ENCODE measurements at regions of chr12 and their contacts with region 1.

Region 1: GRCh38 chr12:12290206-12290605 is 23.4 kb upstream of the LRP6 start:
- DNase-seq: no peak
- H3K4me3 ChIP-seq: no peak overlapping the region
- H3K27ac ChIP-seq: no peak overlapping the region
- H3K4me1 ChIP-seq: peaks cover 10% of the 10 kb centered on the region
- H3K27me3 ChIP-seq: no peaks in the 10 kb centered on the region
- CTCF ChIP-seq: no peak

Region 2: DNA sequence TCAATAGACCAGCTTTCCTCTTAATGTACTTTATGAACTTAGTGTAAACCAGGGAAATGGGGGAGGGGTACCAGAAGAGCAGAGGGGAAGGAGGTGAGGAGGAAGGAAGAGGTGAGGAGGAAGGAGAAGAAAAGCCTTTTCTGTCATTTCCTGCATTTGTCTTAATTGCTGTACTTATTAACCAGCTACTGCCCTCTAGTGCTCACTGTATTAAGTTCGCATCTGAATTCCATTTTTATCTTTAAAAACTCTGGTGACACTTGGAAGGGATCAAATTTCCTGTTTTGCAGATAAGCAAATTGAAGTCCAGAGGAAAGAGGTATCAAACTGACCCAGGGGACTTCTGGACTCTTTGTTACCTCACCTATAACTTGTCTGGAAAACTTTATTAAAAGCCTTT is 37.6 kb after region 1 on chr12:
- CTCF ChIA-PET with region 1: interaction called, 13 read pairs
- POLR2A ChIA-PET with region 1: no interaction called
- intact Hi-C with region 1: no loop called
- DNase-seq: peak; percentile 86
- H3K4me3 ChIP-seq: no peak overlapping the region
- H3K27ac ChIP-seq: peak overlapping the region; percentile 51
- H3K4me1 ChIP-seq: peaks cover 19% of the 10 kb centered on the region
- H3K27me3 ChIP-seq: no peaks in the 10 kb centered on the region
- CTCF ChIP-seq: peak; percentile 76

Region 3: DNA sequence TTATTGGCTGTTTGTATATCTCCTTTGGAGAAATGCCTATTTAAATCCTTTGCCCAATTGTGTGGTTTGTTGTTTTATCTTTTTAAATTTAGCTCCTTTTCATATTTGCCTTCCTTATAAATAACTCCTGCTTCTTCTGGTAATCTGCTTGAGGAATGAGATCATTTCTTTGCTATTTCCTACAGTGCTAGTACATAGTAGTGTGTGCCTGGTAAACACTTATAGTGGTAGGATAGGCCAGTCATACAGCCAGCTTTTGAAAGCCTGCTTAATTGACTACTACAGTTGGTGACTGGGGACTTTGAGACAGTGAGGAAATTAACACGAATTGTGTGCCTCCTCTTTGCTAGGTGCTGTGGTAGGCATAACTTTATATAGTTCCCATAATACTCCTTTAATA is 135.4 kb after region 1 on chr12:
- CTCF ChIA-PET with region 1: no interaction called
- POLR2A ChIA-PET with region 1: no interaction called
- intact Hi-C with region 1: no loop called
- DNase-seq: no peak
- H3K4me3 ChIP-seq: no peak overlapping the region
- H3K27ac ChIP-seq: no peak overlapping the region
- H3K4me1 ChIP-seq: peaks cover 2% of the 10 kb centered on the region
- H3K27me3 ChIP-seq: no peaks in the 10 kb centered on the region
- CTCF ChIP-seq: no peak

Measured in A673 (cell line).